Breast epithelium (tissue), 4 donors: ENCODE measurements at regions of chrX and their contacts with region 1.

Region 1: DNA sequence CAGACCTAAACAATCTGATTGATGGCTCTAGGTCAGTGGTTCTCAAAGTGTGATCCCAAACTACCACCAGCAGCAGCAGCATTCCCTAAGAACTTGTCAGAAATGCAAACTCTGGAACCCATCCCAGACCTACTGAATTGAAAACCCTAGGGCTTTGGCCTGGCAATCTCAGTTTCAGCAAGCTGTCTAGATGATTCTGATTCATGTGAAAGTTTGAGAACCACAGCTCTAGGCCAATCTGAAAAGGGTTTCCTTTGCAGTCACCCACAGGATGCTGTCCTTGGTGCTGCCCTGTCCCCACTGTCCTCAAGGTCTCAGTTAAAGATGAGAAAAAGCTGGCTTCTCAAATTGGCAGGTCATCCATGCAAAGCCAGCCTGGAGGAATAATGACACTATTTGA is 34.8 kb downstream of the SMPX start:
- DNase-seq: no peak
- H3K4me3 ChIP-seq: no peak overlapping the region
- H3K27ac ChIP-seq: no peak overlapping the region
- H3K4me1 ChIP-seq: no peaks in the 10 kb centered on the region
- H3K27me3 ChIP-seq: peaks cover 0 to 40% of the 10 kb centered on the region in 2 donors
- CTCF ChIP-seq: no peak
- POLR2A ChIP-seq: no peak

Region 2: GRCh38 chrX:20857746-20858145 is 865.3 kb before region 1 on chrX:
- intact Hi-C with region 1: loop called (anchors 5 kb)
- DNase-seq: no peak
- H3K4me3 ChIP-seq: no peak overlapping the region
- H3K27ac ChIP-seq: no peak overlapping the region
- H3K4me1 ChIP-seq: no peaks in the 10 kb centered on the region
- H3K27me3 ChIP-seq: no peaks in the 10 kb centered on the region
- CTCF ChIP-seq: no peak
- POLR2A ChIP-seq: no peak

Region 3: DNA sequence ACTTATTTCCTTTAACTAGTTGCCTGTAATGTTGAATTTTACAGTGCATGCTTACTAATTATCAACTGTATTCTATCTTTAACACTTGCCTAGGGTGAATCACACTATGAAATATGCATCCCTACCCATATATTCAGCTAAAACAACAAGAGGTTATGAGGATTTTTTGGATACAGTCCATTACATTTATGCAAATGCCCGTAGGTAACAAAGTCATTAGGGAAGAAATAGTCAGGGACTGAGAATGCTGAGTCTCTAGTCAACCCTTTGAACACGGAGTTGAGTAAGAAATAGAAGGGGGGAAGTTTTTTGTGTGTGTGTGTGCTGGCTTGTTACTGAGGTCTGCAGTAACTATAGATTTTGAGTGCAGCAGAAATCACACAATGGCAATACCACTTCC is 523.5 kb after region 1 on chrX:
- intact Hi-C with region 1: no loop called
- DNase-seq: no peak
- H3K4me3 ChIP-seq: no peak overlapping the region
- H3K27ac ChIP-seq: no peak overlapping the region
- H3K4me1 ChIP-seq: no peaks in the 10 kb centered on the region
- H3K27me3 ChIP-seq: peaks cover 0 to 11% of the 10 kb centered on the region in 2 donors
- CTCF ChIP-seq: no peak
- POLR2A ChIP-seq: no peak

Region 4: GRCh38 chrX:22268706-22269105 is 545.6 kb after region 1 on chrX:
- intact Hi-C with region 1: no loop called
- DNase-seq: no peak
- H3K4me3 ChIP-seq: no peak overlapping the region
- H3K27ac ChIP-seq: no peak overlapping the region
- H3K4me1 ChIP-seq: no peaks in the 10 kb centered on the region
- H3K27me3 ChIP-seq: peaks cover 0 to 8% of the 10 kb centered on the region in 2 donors
- CTCF ChIP-seq: no peak
- POLR2A ChIP-seq: no peak

Region 5: GRCh38 chrX:23008431-23009099 is 1285.5 kb after region 1 on chrX:
- intact Hi-C with region 1: no loop called
- DNase-seq: no peak
- H3K4me3 ChIP-seq: no peak overlapping the region
- H3K27ac ChIP-seq: no peak overlapping the region
- H3K4me1 ChIP-seq: no peaks in the 10 kb centered on the region
- H3K27me3 ChIP-seq: peaks cover 0 to 9% of the 10 kb centered on the region in 2 donors
- CTCF ChIP-seq: no peak
- POLR2A ChIP-seq: no peak